Upper lobe of right lung (tissue), 1 donor: ENCODE measurements at regions of chr11 and their contacts with region 1.

Region 1: DNA sequence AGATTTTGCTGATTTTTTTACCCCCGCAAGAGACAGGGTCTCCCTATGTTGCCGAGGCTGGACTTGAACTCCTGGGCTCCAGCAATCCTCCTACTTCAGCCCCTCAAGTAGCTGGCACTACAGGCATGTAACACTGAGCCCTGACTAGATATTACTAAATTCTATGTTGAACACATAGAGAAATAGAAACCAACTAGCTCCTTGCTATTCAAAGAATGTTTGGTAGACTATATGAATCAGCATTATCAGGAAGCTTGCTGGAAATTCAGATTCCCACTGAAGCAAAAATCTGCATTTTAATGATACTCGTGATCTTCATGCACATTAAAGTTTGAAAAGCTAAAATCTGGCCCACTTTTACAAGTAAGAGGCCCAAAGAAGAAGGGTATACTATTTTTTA is 11.9 kb downstream of the TMEM41B start:
- DNase-seq: no peak
- ATAC-seq: no peak
- H3K4me3 ChIP-seq: no peak overlapping the region
- H3K27ac ChIP-seq: no peak overlapping the region
- H3K4me1 ChIP-seq: no peaks in the 10 kb centered on the region
- H3K27me3 ChIP-seq: no peaks in the 10 kb centered on the region
- CTCF ChIP-seq: no peak

Region 2: DNA sequence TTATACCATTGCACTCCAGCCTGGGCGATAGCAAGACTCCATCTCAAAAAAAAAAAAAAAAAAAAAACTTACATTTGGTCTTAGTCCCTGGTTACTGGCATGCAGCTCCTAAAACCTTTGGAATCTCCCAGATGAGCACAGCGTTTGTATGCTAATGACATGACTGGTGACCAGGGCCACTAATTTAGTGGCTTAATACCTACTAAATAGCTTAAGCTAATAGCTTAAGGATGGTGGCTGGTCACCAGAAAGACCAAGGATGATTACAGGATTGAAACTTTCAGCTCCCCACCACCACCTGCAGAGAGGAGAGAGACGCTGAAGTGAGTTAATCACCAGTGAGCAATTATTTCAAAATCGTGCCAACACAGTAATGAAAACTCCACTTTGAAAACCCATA is 74.4 kb before region 1 on chr11:
- intact Hi-C with region 1: loop called (anchors 5 kb)
- DNase-seq: no peak
- ATAC-seq: no peak
- H3K4me3 ChIP-seq: no peak overlapping the region
- H3K27ac ChIP-seq: no peak overlapping the region
- H3K4me1 ChIP-seq: peaks cover 25% of the 10 kb centered on the region
- H3K27me3 ChIP-seq: no peaks in the 10 kb centered on the region
- CTCF ChIP-seq: no peak

Region 3: GRCh38 chr11:9479899-9480298 is 177.5 kb after region 1 on chr11:
- intact Hi-C with region 1: no loop called
- DNase-seq: no peak
- ATAC-seq: no peak
- H3K4me3 ChIP-seq: no peak overlapping the region
- H3K27ac ChIP-seq: no peak overlapping the region
- H3K4me1 ChIP-seq: no peaks in the 10 kb centered on the region
- H3K27me3 ChIP-seq: no peaks in the 10 kb centered on the region
- CTCF ChIP-seq: no peak